BJ (cell line): ENCODE measurements at regions of chr22 and their contacts with region 1.

Region 1: DNA sequence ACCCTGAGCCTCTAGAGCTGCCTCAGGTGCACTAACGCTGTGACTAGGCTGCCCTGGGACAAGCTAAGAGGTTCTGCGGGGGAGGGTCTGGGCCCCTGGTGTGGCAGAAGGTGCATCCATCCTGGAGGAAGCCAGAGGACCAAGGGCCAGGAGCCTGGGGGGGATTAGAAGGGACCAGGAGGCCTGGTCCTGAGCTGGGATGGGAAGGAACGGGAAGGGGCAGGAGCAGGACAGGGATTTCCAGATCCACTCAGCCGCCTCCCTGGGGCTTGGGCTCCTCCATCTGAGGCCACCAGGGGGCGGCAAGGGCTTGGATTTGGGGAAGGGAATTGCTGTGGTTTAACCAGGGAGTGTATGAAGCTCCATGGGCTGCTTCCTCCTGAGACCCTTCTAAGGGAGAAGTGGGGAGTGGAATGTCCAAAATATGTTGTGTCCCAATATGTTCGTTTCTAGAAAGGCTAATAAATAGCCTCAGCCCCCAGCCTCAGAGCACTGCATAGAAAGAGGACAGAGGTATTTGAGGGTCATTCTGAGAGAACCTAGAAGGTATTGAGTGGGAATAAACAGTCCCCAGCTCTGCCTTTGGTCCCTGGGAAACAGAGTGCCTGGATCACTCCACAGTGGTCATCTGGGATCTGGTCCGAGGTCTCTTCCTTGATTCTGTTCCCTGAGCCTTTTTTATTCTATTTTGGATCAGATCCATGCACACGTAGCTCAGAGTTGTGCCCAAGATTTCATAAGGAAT is 17.4 kb upstream of the PRAME start:
- DNase-seq: no peak
- H3K4me3 ChIP-seq: no peak overlapping the region
- H3K27me3 ChIP-seq: peaks cover 1% of the 10 kb centered on the region; the same call in 1 of the 2 replicates
- CTCF ChIP-seq: peak; percentile 90

Region 2: DNA sequence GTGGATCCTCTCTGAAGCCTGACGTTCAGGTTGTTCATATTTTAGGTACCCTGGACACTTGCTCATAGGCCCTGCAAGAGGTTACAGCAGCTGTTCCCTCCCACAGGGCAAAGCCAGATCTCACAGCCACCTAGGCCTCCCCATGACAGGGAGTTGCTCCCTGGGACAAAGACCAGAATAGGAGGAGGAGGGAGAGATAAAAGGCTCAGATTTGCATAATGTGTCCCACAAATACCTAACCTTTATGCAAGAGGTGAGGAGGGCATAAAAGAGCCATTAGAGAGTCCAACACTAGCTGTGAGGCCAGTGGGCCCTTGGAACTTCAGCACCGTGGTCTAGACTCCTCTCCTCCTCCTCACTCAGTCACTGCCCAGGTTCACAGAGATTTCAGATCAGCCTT is 101.7 kb before region 1 on chr22:
- CTCF ChIA-PET with region 1: no interaction called
- POLR2A ChIA-PET with region 1: no interaction called
- DNase-seq: no peak
- H3K4me3 ChIP-seq: no peak overlapping the region
- H3K27me3 ChIP-seq: no peaks in the 10 kb centered on the region
- CTCF ChIP-seq: no peak

Region 3: DNA sequence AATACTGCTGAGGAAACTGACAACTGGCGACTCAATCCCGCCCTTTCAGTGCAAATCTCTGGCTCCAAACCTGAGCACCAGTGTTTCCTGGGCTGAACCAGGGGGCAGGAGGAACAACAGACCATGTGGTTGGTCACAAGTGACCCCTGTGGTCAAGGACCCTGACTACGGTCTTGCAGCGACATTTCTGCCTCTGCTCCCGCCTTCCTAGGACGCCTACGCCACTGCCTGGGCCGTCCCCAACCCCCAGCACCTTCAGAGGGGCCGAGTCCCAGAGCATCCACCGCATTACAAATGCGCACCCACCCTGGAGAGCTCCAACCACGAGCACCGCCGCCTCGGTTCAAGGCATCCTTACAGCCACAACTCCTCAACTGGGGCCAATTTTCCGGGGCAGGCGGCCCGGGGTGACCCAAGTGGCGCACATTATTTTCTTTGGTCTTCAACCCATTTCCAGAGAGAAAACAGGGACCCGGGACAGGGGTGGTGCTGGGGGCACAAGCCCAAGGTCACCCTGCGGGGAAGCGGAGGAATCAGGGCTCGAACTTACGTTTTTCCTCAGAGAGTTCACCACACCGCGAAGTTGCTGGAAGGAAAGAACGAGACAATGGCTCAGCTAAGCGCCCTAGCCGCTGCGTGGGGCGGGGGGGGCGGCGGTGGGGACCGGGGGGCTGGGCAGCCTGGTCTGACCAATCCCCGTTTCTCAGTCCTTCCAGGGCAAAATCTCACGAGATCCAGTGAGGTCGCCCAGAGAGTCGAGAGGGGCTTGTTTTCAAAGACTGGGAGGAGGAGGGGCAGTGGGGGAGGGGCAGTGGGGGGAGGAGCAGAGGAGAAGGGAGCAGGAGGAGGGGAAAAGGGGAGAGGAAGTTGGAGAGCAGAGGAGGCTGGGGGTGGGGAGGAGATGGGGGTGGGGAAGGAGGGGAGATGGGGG is 19.2 kb before region 1 on chr22:
- CTCF ChIA-PET with region 1: interaction called, 13 read pairs
- POLR2A ChIA-PET with region 1: no interaction called
- DNase-seq: no peak
- H3K4me3 ChIP-seq: no peak overlapping the region
- H3K27me3 ChIP-seq: no peaks in the 10 kb centered on the region
- CTCF ChIP-seq: no peak

Region 4: GRCh38 chr22:22591348-22592299 is 15.2 kb after region 1 on chr22:
- CTCF ChIA-PET with region 1: interaction called, 70 read pairs
- POLR2A ChIA-PET with region 1: no interaction called
- DNase-seq: no peak
- H3K4me3 ChIP-seq: no peak overlapping the region
- H3K27me3 ChIP-seq: no peaks in the 10 kb centered on the region; the same call in 1 of the 2 replicates
- CTCF ChIP-seq: no peak

Region 5: GRCh38 chr22:22728382-22728781 is 152.0 kb after region 1 on chr22:
- CTCF ChIA-PET with region 1: no interaction called
- POLR2A ChIA-PET with region 1: no interaction called
- DNase-seq: no peak
- H3K4me3 ChIP-seq: no peak overlapping the region
- H3K27me3 ChIP-seq: no peaks in the 10 kb centered on the region; the same call in none of the 2 replicates
- CTCF ChIP-seq: no peak